ENCODE measurements at regions of chr1 and their contacts with region 1.

Region 1: DNA sequence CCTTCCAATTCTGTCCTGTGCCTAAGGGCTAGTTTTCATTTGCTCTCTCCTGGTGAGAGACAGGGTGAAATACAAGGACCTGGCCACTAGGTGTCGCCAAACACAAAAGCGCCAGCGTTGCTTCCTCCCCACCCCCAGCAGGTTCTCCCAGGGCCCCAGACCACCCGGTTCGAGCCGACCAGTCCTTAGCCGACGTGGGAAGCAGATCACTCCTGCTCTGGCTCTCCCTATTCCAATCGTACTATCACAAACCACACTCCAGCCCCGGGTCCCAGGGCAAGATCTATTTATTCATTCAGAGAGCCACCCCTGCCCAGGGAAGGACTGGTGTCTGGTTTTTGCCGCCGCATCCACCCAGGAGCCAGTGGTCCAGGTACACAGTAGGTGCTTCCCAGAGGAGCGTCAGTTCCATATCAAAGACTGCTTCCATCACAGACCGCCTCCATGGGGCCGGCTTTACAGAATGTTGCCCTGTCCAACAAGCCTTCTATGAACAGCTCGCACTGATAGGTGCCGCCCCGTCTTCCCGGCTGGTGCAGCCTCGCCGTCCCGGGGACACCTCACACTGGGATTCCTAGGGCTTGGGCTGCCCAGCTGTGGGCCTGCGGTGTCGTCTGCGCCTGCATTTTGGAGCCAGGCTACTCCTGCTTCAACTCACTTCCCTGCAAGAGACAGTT is 35.0 kb downstream of the CTNNBIP1 start:
- DNase-seq: peak; percentile 76
- H3K4me3 ChIP-seq: no peak overlapping the region
- H3K27ac ChIP-seq: no peak overlapping the region
- H3K4me1 ChIP-seq: no peaks in the 10 kb centered on the region
- H3K27me3 ChIP-seq: no peaks in the 10 kb centered on the region
- CTCF ChIP-seq: peak; percentile 95

Region 2: GRCh38 chr1:9910425-9911178 is 35.5 kb after region 1 on chr1:
- intact Hi-C with region 1: loop called (anchors 5 kb)
- DNase-seq: peak; percentile 100
- H3K4me3 ChIP-seq: peak overlapping the region; percentile 51
- H3K27ac ChIP-seq: peak overlapping the region; percentile 89
- H3K4me1 ChIP-seq: peaks cover 4% of the 10 kb centered on the region
- H3K27me3 ChIP-seq: no peaks in the 10 kb centered on the region
- CTCF ChIP-seq: no peak

Region 3: DNA sequence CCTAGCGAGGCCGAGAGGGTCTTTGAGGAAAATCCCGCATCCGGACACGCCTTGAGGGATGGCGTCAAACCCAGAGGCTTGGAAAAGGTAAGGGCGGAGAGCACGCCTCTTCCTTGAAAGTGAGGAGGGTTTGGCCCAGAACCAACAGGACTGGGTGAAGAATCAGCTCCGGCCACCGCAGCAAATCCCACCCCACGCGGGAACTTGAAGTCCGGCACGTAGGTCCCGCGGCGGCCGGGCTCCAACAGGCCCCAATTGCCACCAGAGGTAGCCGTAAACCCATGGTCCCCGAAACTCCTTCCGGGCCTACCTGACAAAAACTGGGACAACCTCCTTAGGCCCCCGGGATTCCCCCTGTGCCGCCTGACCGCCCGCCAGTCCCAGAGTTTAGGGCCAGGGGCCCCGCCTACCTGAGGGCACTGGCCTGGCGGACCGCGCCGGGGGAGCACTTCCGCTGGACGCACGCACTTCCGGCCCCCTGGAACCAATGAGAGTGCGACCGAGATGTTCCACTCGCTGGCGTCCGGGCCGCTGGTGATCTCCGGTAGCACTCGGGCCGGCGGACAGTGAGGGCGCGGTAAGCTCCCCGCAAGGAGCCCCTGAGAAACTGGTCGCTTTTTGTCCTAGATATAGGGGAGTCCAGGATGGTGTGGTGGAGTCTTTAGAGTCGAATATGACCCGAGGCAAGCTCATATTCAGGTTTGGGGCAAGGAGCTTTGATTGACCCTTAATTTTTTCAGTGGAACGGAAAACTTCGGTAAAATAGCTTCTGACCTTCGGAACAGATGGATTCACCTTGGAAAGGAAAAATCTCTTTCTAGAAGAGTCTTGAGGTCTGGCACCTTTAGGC is 68.1 kb after region 1 on chr1 and contains the starts of genes LZIC and NMNAT1:
- intact Hi-C with region 1: loop called (anchors 2 kb)
- DNase-seq: peak; percentile 95
- H3K4me3 ChIP-seq: peak within 1 kb of the TSS; percentile 77
- H3K27ac ChIP-seq: peak within 1 kb of the TSS; percentile 90
- H3K4me1 ChIP-seq: no peaks in the 10 kb centered on the region
- H3K27me3 ChIP-seq: no peaks in the 10 kb centered on the region
- CTCF ChIP-seq: no peak
- total RNA-seq, gene LZIC: 40.6 to 47.2 TPM
- total RNA-seq, gene NMNAT1: 18.8 to 25.4 TPM

Region 4: GRCh38 chr1:10032590-10033358 is 157.7 kb after region 1 on chr1 and contains the start of gene UBE4B:
- intact Hi-C with region 1: loop called (anchors 5 kb)
- DNase-seq: peak; percentile 97
- H3K4me3 ChIP-seq: peak within 1 kb of the TSS; percentile 78
- H3K27ac ChIP-seq: peak within 1 kb of the TSS; percentile 91
- H3K4me1 ChIP-seq: peaks cover 9% of the 10 kb centered on the region
- H3K27me3 ChIP-seq: no peaks in the 10 kb centered on the region
- CTCF ChIP-seq: peak; percentile 87
- total RNA-seq, gene UBE4B: 34.6 to 40.9 TPM

Region 5: DNA sequence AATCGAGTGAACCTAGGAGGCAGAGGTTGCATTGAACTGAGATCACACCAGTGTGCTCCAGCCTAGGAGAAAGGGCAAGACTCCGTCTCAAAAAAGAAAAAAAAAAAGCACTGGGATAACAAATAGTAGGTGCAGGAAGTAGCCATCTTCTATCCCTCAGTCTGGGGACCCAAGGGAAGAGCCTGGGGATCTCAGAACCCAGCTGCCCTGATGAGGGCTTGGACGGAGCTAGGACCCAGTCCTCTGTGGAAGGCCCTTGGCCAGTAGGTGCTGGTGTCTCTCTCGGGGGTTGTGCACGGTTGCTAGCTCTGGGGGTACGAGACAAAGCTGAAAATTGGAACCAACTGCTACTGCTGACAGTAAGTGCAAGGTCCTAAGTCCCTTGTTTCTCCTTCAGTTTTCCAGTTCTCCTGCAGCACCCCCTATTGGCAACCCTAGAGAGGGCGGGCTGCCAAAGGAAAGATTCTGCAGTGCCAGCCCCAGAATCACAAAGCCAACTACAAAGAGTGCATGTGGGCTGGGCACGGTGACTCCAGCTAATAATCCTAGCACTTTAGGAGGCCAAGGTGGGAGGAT is 277.7 kb after region 1 on chr1:
- intact Hi-C with region 1: loop called (anchors 10 kb)
- DNase-seq: peak; percentile 66
- H3K4me3 ChIP-seq: no peak overlapping the region
- H3K27ac ChIP-seq: no peak overlapping the region
- H3K4me1 ChIP-seq: no peaks in the 10 kb centered on the region
- H3K27me3 ChIP-seq: no peaks in the 10 kb centered on the region
- CTCF ChIP-seq: peak; percentile 53

Measured in colonic mucosa (tissue), 4 donors.